Esophagus muscularis mucosa (tissue), 4 donors: ENCODE measurements at regions of chr12 and their contacts with region 1.

Region 1: GRCh38 chr12:23055004-23055403 is 430.0 kb downstream of the ETNK1 start:
- DNase-seq: no peak
- H3K4me3 ChIP-seq: no peak overlapping the region
- H3K27ac ChIP-seq: no peak overlapping the region
- H3K4me1 ChIP-seq: peaks cover 0 to 5% (median 2%) of the 10 kb centered on the region in 4 donors
- H3K27me3 ChIP-seq: no peaks in the 10 kb centered on the region
- CTCF ChIP-seq: peak; percentile 51 to 67 (median 57)
- EP300 ChIP-seq: no peak
- POLR2A ChIP-seq: no peak

Region 2: DNA sequence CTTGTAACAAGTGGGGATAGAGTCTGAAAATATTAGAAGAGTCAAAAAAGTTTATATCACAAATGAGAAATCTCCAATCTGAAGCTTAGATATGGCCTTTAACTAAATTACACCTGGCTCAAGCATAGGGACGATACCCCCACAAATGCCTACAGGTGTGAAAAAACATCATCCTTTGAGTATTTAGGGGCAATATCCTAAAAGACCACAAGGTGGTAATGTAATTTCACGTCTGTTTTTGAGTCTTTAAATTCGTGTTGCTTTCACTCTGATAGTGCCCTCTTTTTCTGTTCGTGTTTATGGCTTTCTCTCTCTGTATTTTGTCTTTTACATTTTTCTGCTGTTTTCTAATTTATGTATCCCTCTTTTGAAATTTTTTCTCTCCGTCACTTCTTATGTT is 345.7 kb before region 1 on chr12:
- intact Hi-C with region 1: loop called (anchors 5 kb)
- DNase-seq: no peak
- H3K4me3 ChIP-seq: no peak overlapping the region
- H3K27ac ChIP-seq: peak overlapping the region in 1 of 4 donors; percentile 17
- H3K4me1 ChIP-seq: peaks cover 0 to 8% (median 3%) of the 10 kb centered on the region in 4 donors
- H3K27me3 ChIP-seq: no peaks in the 10 kb centered on the region
- CTCF ChIP-seq: peak; percentile 60 to 74 (median 74)
- EP300 ChIP-seq: no peak
- POLR2A ChIP-seq: no peak

Region 3: DNA sequence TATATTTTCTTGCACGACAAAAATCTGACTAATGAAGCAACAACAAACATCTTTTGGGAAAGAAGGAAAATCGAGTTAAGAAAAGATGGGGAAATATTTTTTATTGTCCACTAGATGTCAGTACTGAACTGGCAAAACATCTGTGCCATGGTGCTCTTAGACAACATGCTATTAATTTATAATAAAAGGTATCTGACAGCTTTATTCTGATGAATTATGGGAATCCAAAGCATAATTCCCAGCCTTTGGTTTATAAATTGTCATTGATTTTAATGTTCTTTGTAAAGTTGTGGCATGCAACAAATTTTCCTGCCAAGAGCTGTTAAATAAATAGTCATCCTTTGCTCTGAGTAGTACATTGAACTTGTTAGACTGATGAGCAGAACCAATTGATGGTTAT is 198.8 kb before region 1 on chr12:
- intact Hi-C with region 1: loop called (anchors 5 kb)
- DNase-seq: no peak
- H3K4me3 ChIP-seq: peak overlapping the region in 1 of 4 donors; percentile 17
- H3K27ac ChIP-seq: no peak overlapping the region
- H3K4me1 ChIP-seq: peaks cover 0 to 24% (median 17%) of the 10 kb centered on the region in 4 donors
- H3K27me3 ChIP-seq: no peaks in the 10 kb centered on the region
- CTCF ChIP-seq: peak; percentile 54 to 59 (median 59)
- EP300 ChIP-seq: no peak
- POLR2A ChIP-seq: no peak

Region 4: DNA sequence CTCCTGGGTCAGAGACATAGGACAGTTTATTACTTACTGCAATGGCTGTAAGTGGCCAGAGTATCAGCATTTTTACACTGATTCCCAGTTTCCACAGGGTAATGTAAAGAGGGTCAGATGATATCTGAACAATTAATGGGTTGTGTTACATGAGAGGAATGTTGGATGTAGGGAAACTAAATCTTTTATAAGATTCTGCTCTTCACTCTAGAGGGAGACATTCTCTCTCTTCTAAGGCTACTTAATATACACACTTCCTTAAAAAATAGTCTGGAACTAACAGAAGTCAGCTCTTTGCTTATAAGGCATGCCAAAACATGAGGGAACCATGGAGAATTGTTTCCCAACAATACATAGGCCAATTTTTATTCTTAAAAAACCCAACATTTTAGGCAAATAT is 40.3 kb before region 1 on chr12:
- intact Hi-C with region 1: no loop called
- DNase-seq: no peak
- H3K4me3 ChIP-seq: no peak overlapping the region
- H3K27ac ChIP-seq: no peak overlapping the region
- H3K4me1 ChIP-seq: no peaks in the 10 kb centered on the region
- H3K27me3 ChIP-seq: no peaks in the 10 kb centered on the region
- CTCF ChIP-seq: no peak
- EP300 ChIP-seq: no peak
- POLR2A ChIP-seq: no peak